CD8-positive, alpha-beta memory T cell (primary cell): ENCODE measurements at regions of chr7 and their contacts with region 1.

Region 1: DNA sequence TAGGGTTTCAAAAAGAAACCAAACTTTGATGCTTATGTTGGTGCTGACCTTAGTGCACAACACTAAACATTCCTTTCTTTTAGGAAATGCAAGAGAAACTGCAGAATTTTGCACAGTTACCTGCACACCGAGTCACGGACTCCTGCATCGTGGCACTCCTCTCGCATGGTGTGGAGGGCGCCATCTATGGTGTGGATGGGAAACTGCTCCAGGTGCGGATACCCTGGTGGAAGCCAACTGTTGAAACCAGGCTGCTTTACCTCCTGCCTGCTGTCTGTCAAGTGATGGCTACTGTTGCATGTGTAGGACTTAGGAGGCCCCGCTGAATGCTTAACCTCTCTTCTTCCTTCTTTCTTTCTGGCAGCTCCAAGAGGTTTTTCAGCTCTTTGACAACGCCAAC is 11.7 kb downstream of the CASP2 start:
- DNase-seq: peak; percentile 29 to 75 (median 49)
- H3K4me3 ChIP-seq: no peak overlapping the region
- H3K4me3 Mint-ChIP-seq: no peak overlapping the region
- H3K27ac ChIP-seq: no peak overlapping the region
- H3K27ac Mint-ChIP-seq: peak overlapping the region in 3 of 8 donors; percentile 7 to 54 (median 38)
- H3K4me1 ChIP-seq: peaks cover 24% of the 10 kb centered on the region
- H3K4me1 Mint-ChIP-seq: peaks cover 32 to 52% (median 42%) of the 10 kb centered on the region in 3 donors
- H3K27me3 ChIP-seq: no peaks in the 10 kb centered on the region
- H3K27me3 Mint-ChIP-seq: no peaks in the 10 kb centered on the region

Region 2: DNA sequence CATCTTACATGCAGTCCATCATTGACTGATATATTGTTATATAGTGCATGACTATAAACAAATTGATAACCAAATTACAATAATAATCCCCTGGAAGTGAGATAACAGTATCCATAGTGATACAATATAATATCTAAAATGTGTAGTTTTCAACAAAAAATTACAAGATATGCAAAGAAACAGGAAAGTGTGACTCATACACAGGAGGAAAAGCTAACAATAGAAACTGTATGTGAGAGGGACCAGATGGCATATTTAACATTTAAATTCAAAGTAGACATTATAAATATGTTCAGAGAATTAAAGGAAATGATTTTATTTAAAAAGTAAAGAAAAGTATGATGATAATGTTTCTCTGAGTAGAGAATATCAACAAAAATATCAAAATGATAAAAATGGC is 280.9 kb before region 1 on chr7:
- CTCF ChIA-PET with region 1: no interaction called
- POLR2A ChIA-PET with region 1: no interaction called
- DNase-seq: no peak
- H3K4me3 ChIP-seq: no peak overlapping the region
- H3K4me3 Mint-ChIP-seq: no peak overlapping the region
- H3K27ac ChIP-seq: no peak overlapping the region
- H3K27ac Mint-ChIP-seq: no peak overlapping the region
- H3K4me1 ChIP-seq: no peaks in the 10 kb centered on the region
- H3K4me1 Mint-ChIP-seq: no peaks in the 10 kb centered on the region
- H3K27me3 ChIP-seq: no peaks in the 10 kb centered on the region
- H3K27me3 Mint-ChIP-seq: peaks cover 12 to 25% of the 10 kb centered on the region in 2 donors

Region 3: GRCh38 chr7:143205560-143206293 is 94.1 kb before region 1 on chr7:
- CTCF ChIA-PET with region 1: no interaction called
- POLR2A ChIA-PET with region 1: no interaction called
- DNase-seq: peak in 2 of 5 donors; percentile 28 to 33
- H3K4me3 ChIP-seq: no peak overlapping the region
- H3K4me3 Mint-ChIP-seq: peak overlapping the region in 5 of 7 donors; percentile 6 to 49 (median 15)
- H3K27ac ChIP-seq: no peak overlapping the region
- H3K27ac Mint-ChIP-seq: peak overlapping the region in 3 of 8 donors; percentile 3 to 44 (median 40)
- H3K4me1 ChIP-seq: peaks cover 16% of the 10 kb centered on the region
- H3K4me1 Mint-ChIP-seq: peaks cover 11 to 15% (median 14%) of the 10 kb centered on the region in 3 donors
- H3K27me3 ChIP-seq: no peaks in the 10 kb centered on the region
- H3K27me3 Mint-ChIP-seq: peaks cover 5 to 30% of the 10 kb centered on the region in 2 donors

Region 4: DNA sequence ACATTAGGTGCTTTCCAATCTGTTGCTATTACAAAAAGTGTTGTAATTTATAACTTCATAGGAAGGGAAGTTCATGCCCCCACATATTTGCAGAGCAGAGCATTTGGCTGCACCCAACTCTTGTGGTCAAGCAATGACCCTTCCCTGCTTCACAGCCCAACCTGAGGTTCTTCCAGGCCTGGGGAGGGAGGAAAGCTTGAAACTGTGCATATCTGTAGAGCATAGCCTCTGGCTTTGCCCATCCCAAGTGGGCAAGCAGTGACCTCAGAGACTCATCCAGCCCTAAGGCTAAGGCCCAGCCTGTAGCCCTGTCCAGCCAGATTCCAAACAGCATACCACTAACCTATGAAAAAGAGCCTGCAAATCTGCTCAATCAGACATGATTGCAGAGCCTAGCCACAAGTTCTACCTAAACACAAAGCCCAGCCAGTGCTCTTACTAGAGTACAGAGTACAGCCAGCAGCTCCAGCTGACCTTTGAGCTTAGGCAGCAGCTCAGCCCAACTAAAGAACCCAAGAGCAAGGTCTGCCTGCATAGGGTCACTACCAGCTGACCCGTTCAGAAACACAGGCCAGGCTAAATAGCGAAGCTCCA is 51.0 kb before region 1 on chr7:
- CTCF ChIA-PET with region 1: interaction called, 17 read pairs
- POLR2A ChIA-PET with region 1: interaction called, 6 read pairs
- DNase-seq: no peak
- H3K4me3 ChIP-seq: no peak overlapping the region
- H3K4me3 Mint-ChIP-seq: peak overlapping the region in 3 of 7 donors; percentile 12 to 19 (median 19)
- H3K27ac ChIP-seq: no peak overlapping the region
- H3K27ac Mint-ChIP-seq: peak overlapping the region in 5 of 8 donors; percentile 23 to 86 (median 60)
- H3K4me1 ChIP-seq: peaks cover 72% of the 10 kb centered on the region
- H3K4me1 Mint-ChIP-seq: peaks cover 84 to 99% (median 97%) of the 10 kb centered on the region in 3 donors
- H3K27me3 ChIP-seq: no peaks in the 10 kb centered on the region
- H3K27me3 Mint-ChIP-seq: no peaks in the 10 kb centered on the region

Region 5: DNA sequence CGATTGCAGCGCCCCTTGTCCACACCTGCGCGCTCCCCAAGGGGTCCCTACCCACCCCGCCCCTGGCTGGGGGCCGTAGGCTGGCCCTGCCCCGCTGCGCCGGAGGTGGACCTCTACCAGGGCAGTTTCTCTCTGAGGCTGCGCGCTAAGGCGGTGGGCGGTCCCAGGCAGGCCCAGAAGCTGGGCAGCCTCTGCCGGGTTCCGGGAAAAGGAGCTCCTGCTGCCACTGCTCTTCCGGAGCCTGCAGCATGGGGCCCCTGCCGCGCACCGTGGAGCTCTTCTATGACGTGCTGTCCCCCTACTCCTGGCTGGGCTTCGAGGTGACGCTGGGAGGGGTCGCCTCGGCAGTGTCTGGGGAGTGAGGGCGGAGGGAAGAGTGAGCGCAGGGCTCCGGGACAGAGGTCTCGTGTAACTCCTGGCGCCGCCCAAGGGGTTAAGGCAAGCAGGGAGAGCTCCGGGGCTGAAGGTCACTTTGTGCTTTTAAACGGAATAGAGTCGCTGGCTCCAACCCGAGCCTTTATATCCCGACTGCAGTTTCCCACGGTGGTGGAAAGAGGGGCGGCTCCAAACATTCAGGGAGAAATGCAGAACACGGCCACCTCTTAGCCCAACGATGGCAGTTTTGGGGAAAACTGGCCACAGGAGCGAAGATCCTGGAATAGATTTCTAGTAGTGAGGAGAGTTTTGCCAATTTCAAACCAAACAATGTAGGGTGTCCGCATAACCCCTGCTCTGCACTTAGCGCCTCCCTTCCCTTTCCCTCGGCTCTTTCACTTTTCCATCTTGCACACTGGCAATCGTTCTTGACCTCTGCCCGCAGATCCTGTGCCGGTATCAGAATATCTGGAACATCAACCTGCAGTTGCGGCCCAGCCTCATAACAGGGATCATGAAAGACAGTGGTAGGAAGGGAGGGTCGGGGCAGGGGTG is 36.3 kb before region 1 on chr7 and contains the start of gene GSTK1:
- CTCF ChIA-PET with region 1: interaction called, 12 read pairs
- POLR2A ChIA-PET with region 1: no interaction called
- DNase-seq: peak; percentile 70 to 88 (median 78)
- H3K4me3 ChIP-seq: peak within 1 kb of the TSS; percentile 95
- H3K4me3 Mint-ChIP-seq: peak within 1 kb of the TSS; percentile 88 to 99 (median 97)
- H3K27ac ChIP-seq: peak within 1 kb of the TSS; percentile 83
- H3K27ac Mint-ChIP-seq: peak within 1 kb of the TSS; percentile 63 to 98 (median 94)
- H3K4me1 ChIP-seq: peaks cover 37% of the 10 kb centered on the region
- H3K4me1 Mint-ChIP-seq: peaks cover 49 to 84% (median 66%) of the 10 kb centered on the region in 3 donors
- H3K27me3 ChIP-seq: no peaks in the 10 kb centered on the region
- H3K27me3 Mint-ChIP-seq: no peaks in the 10 kb centered on the region
- total RNA-seq, gene GSTK1: 147 to 151 TPM

Region 6: GRCh38 chr7:143279186-143280098 is 20.4 kb before region 1 on chr7:
- CTCF ChIA-PET with region 1: interaction called, 11 read pairs
- POLR2A ChIA-PET with region 1: no interaction called
- DNase-seq: peak in 2 of 5 donors; percentile 26 to 41
- H3K4me3 ChIP-seq: peak overlapping the region; percentile 8
- H3K4me3 Mint-ChIP-seq: peak overlapping the region; percentile 34 to 85 (median 73)
- H3K27ac ChIP-seq: peak overlapping the region; percentile 33
- H3K27ac Mint-ChIP-seq: peak overlapping the region; percentile 82 to 96 (median 90)
- H3K4me1 ChIP-seq: peaks cover 27% of the 10 kb centered on the region
- H3K4me1 Mint-ChIP-seq: peaks cover 33 to 43% (median 34%) of the 10 kb centered on the region in 3 donors
- H3K27me3 ChIP-seq: no peaks in the 10 kb centered on the region
- H3K27me3 Mint-ChIP-seq: no peaks in the 10 kb centered on the region

Region 7: GRCh38 chr7:143287935-143288826 is 11.7 kb before region 1 on chr7 and contains the start of gene CASP2:
- CTCF ChIA-PET with region 1: interaction called, 13 read pairs
- POLR2A ChIA-PET with region 1: no interaction called
- DNase-seq: peak; percentile 98 to 100 (median 99)
- H3K4me3 ChIP-seq: peak within 1 kb of the TSS; percentile 59
- H3K4me3 Mint-ChIP-seq: peak within 1 kb of the TSS; percentile 88 to 99 (median 95)
- H3K27ac ChIP-seq: peak within 1 kb of the TSS; percentile 83
- H3K27ac Mint-ChIP-seq: peak within 1 kb of the TSS; percentile 85 to 99 (median 91)
- H3K4me1 ChIP-seq: peaks cover 29% of the 10 kb centered on the region
- H3K4me1 Mint-ChIP-seq: peaks cover 50 to 68% (median 61%) of the 10 kb centered on the region in 3 donors
- H3K27me3 ChIP-seq: no peaks in the 10 kb centered on the region
- H3K27me3 Mint-ChIP-seq: no peaks in the 10 kb centered on the region
- total RNA-seq, gene CASP2: 105 to 107 TPM

Region 8: GRCh38 chr7:143408686-143409561 is 109.1 kb after region 1 on chr7 and contains the start of gene EPHA1:
- CTCF ChIA-PET with region 1: interaction called, 23 read pairs
- POLR2A ChIA-PET with region 1: no interaction called
- DNase-seq: peak; percentile 28 to 64 (median 45)
- H3K4me3 ChIP-seq: peak within 1 kb of the TSS; percentile 81
- H3K4me3 Mint-ChIP-seq: peak within 1 kb of the TSS; percentile 78 to 97 (median 89)
- H3K27ac ChIP-seq: no peak within 1 kb of the TSS
- H3K27ac Mint-ChIP-seq: peak within 1 kb of the TSS; percentile 63 to 99 (median 94)
- H3K4me1 ChIP-seq: peaks cover 57% of the 10 kb centered on the region
- H3K4me1 Mint-ChIP-seq: peaks cover 41 to 60% (median 53%) of the 10 kb centered on the region in 3 donors
- H3K27me3 ChIP-seq: no peaks in the 10 kb centered on the region
- H3K27me3 Mint-ChIP-seq: peaks cover 8 to 21% of the 10 kb centered on the region in 2 donors
- total RNA-seq, gene EPHA1: 2.8 to 3.1 TPM

Region 9: GRCh38 chr7:143416565-143417149 is 116.8 kb after region 1 on chr7:
- CTCF ChIA-PET with region 1: interaction called, 10 read pairs
- POLR2A ChIA-PET with region 1: no interaction called
- DNase-seq: peak in 2 of 5 donors; percentile 49 to 56
- H3K4me3 ChIP-seq: no peak overlapping the region
- H3K4me3 Mint-ChIP-seq: no peak overlapping the region
- H3K27ac ChIP-seq: no peak overlapping the region
- H3K27ac Mint-ChIP-seq: no peak overlapping the region
- H3K4me1 ChIP-seq: no peaks in the 10 kb centered on the region
- H3K4me1 Mint-ChIP-seq: peaks cover 0 to 5% (median 4%) of the 10 kb centered on the region in 3 donors
- H3K27me3 ChIP-seq: no peaks in the 10 kb centered on the region
- H3K27me3 Mint-ChIP-seq: peaks cover 13 to 18% of the 10 kb centered on the region in 2 donors